MCF 10A (cell line): ENCODE measurements at regions of chr5 and their contacts with region 1.

Region 1: DNA sequence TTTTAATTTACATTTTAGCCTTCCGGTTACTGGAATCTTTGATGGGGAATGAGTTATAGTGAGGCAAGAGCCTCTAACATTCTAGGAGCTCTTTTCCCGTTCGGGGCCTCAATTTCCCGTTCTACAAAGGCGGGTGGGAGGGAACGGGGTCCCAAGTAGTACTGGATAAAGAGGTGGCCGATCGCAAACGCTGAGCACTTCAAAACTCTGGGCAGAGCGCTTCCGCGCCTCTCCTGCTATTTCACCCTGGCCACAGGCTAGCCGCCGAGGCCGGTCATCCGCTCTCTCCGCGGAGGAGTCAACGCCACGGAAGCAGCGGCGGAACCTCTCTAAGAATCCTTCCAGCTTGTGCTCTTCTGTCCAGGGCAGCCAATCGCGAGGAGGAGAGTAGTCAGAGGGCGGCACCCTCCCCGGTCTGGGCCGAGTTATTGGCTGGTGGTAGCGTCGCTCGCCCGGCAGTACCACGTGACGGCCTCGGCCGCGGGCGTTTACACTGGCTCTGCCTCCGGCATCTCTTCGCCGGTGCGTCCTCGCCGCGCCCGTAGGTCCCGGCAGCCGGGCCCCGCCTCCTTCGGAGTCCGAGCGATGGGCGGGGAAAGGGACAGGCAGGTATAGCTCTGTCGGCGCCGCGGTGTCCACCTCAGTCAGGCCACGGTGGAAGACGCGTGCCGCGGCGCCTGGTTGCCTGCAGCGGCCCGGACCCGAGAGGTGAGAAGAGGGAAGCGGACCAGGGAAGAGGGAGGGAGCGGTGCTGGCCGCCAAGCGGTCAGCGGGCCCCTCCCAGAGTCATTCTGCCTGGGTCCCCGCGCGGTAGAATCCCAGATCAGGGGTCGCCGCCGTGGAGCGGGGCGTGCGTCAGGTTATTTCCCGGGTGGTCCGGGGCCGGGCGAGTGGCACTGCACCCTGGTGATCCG is at the start of gene SLC26A2:
- DNase-seq: peak; percentile 100
- H3K4me3 Mint-ChIP-seq: peak within 1 kb of the TSS; percentile 96
- H3K27ac Mint-ChIP-seq: peak within 1 kb of the TSS; percentile 97
- H3K4me1 Mint-ChIP-seq: peaks cover 38% of the 10 kb centered on the region
- H3K27me3 Mint-ChIP-seq: no peaks in the 10 kb centered on the region
- CTCF ChIP-seq: no peak
- total RNA-seq, gene SLC26A2: 44.1 and 56.2 TPM in 2 replicates

Region 2: DNA sequence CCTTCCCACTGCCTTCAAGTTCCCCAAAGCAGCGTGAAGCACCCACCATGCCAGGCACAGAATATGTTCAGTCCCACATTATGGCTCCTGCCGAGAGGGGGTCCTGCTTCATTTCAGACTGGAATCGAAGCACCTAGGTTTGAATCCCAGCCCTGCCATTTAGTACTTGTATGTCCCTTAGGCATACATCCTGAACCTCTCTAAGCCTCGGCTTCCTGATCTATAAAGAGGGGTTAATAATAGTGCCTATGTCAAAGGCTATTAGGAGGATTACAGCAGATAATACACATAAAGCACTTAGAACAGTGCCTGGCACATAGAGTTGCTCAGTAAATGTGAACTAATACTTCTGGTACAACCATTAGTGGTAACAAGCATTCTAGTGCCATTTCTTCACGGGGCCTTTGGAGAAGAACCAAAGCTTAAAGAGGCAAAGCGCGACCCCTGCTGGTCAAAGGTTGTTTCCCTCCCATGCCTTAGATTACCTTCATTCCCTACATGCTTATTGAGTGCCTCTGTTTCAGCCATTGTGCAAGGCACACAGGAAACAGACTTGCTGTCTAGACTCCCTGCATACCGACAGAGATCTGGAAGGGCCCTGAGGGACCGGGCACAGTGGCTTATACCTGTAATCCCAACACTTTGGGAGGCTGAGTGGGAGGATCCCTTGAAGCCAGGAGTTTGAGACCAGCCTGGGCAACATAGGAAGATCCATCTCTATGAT is 132.2 kb before region 1 on chr5:
- CTCF ChIA-PET with region 1: interaction called, 1,621 read pairs
- POLR2A ChIA-PET with region 1: interaction called, 187 read pairs
- intact Hi-C with region 1: no loop called
- DNase-seq: peak; percentile 99
- H3K4me3 Mint-ChIP-seq: no peak overlapping the region
- H3K27ac Mint-ChIP-seq: peak overlapping the region; percentile 57
- H3K4me1 Mint-ChIP-seq: peaks cover 12% of the 10 kb centered on the region
- H3K27me3 Mint-ChIP-seq: no peaks in the 10 kb centered on the region
- CTCF ChIP-seq: peak; percentile 96

Region 3: DNA sequence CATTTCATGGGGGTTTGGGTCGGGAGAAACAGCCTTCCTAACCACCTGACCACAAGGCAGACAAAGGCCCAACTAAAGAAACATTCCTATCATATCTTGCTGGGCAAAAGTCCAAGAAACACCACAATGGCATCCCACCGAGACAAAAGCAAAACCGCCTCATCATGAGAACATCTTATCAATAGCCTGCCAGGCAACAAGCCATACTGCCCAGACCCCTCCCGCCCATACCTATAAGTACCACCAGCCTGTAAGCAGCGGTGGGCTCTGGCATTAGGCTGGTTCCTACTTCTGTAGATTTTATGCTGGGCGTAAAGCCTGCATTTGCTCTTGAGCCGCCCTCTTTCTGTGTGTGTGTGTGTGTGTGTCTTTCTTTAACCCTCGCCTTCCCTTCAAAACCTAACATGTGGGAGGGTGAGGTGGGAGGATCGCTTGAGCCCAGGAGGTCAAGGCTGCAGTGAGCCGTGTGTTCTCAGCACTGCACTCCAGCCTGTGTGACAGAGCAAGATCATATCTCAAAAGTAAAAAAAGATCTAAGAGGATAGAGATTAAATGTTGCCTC is 72.8 kb before region 1 on chr5:
- CTCF ChIA-PET with region 1: interaction called, 117 read pairs
- POLR2A ChIA-PET with region 1: interaction called, 23 read pairs
- intact Hi-C with region 1: no loop called
- DNase-seq: no peak
- H3K4me3 Mint-ChIP-seq: no peak overlapping the region
- H3K27ac Mint-ChIP-seq: peak overlapping the region; percentile 30
- H3K4me1 Mint-ChIP-seq: peaks cover 34% of the 10 kb centered on the region
- H3K27me3 Mint-ChIP-seq: no peaks in the 10 kb centered on the region
- CTCF ChIP-seq: no peak

Region 4: DNA sequence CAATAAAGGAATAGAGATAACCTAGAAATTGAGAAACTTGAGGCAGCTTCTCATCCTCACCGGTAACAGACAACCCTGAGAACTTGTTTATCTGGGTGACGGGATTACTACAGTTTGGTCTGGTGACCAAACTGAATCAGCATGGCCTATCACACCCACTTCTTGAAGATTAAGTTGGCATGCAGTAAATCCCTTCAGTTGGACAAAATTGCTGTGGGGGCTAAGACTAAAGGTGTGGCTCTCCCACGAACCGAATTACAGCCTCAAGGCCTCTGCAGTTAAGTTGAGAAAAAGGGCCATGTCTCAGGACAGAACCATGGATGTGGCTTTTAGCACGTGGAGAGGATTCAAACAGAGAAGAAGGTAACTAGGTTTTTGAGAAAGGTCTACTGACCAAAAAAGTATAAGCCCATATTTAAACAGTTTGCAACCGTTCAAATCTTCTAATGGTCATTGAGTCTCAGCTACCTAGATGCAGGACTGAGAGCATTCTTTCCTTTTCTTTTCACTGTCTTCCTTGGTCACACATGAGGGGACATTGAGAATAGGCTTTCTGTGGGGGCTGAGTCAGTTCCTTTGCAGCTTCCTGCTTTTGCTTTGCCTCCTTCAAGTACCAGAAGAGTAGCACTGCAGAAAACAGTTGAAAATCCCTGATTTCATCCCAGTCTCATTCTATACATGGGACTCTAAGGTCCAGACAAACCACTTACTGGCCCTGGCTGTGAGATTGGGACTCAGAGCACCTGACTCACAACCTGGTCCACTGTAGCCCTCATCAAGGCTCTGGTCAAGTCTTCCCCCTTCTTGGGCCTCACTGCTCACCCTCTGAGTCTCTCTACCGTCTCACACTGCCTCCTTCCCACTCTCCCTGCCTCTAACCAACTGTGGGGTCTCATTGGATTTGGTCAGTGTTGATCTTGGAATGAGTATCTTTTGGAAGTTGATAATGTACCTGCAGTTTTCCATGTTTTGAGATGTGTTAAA is 46.8 kb before region 1 on chr5:
- CTCF ChIA-PET with region 1: interaction called, 44 read pairs
- POLR2A ChIA-PET with region 1: interaction called, 49 read pairs
- intact Hi-C with region 1: loop called (anchors 2 kb)
- DNase-seq: no peak
- H3K4me3 Mint-ChIP-seq: no peak overlapping the region
- H3K27ac Mint-ChIP-seq: no peak overlapping the region
- H3K4me1 Mint-ChIP-seq: peaks cover 57% of the 10 kb centered on the region
- H3K27me3 Mint-ChIP-seq: no peaks in the 10 kb centered on the region
- CTCF ChIP-seq: no peak

Region 5: GRCh38 chr5:149979896-149980295 is 19.4 kb after region 1 on chr5:
- CTCF ChIA-PET with region 1: interaction called, 15 read pairs
- POLR2A ChIA-PET with region 1: interaction called, 4 read pairs
- intact Hi-C with region 1: no loop called
- DNase-seq: no peak
- H3K4me3 Mint-ChIP-seq: no peak overlapping the region
- H3K27ac Mint-ChIP-seq: no peak overlapping the region
- H3K4me1 Mint-ChIP-seq: peaks cover 22% of the 10 kb centered on the region
- H3K27me3 Mint-ChIP-seq: no peaks in the 10 kb centered on the region
- CTCF ChIP-seq: no peak